Heart left ventricle (tissue), 16 donors: ENCODE measurements at regions of chr4 and their contacts with region 1.

Region 1: GRCh38 chr4:118989098-118990080 is 100.7 kb downstream of the SYNPO2 start:
- DNase-seq: no peak
- ATAC-seq: peak; percentile 35 to 68 (median 52)
- H3K4me3 ChIP-seq: no peak overlapping the region
- H3K27ac ChIP-seq: peak overlapping the region in 11 of 12 donors; percentile 6 to 87 (median 69)
- H3K4me1 ChIP-seq: peaks cover 0 to 79% (median 40%) of the 10 kb centered on the region in 12 donors
- H3K27me3 ChIP-seq: no peaks in the 10 kb centered on the region
- CTCF ChIP-seq: no peak
- POLR2A ChIP-seq: no peak

Region 2: DNA sequence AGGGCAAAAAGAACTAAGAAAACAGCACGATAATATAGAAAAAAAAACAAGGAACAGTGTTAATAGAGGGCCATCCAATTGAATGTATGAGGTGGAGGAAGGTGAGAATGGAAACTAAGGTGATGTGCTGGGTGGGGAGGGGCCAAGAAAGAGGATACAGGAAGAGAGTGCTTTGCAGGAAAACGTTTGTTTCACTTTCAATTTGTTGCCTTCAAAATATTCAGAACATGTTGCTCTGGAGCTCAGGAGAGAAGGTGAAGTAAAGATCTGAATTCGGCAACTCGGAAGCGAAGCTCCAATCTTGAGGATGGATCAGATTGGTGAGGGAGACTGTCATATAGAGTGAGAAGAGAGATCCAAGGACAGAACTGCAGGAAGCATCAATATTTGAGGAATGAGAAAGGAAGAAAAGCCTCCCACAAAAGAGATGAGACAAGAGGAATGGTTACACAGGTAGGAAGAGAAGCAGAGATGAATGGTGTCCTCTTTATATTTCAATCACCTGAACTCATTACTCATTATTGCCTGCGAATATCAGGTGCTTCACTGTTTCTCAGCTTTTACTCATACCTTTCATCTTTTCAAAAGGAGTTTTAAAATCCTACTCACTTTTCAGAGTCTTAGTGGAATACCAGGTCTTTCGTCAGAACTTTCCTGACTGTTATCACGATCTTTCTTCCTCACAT is 138.8 kb before region 1 on chr4:
- intact Hi-C with region 1: no loop called
- DNase-seq: no peak
- ATAC-seq: peak in 3 of 4 donors; percentile 39 to 63 (median 42)
- H3K4me3 ChIP-seq: peak overlapping the region in 11 of 12 donors; percentile 5 to 61 (median 47)
- H3K27ac ChIP-seq: peak overlapping the region in 5 of 12 donors; percentile 1 to 51 (median 50)
- H3K4me1 ChIP-seq: peaks cover 0 to 13% (median 4%) of the 10 kb centered on the region in 12 donors
- H3K27me3 ChIP-seq: no peaks in the 10 kb centered on the region
- CTCF ChIP-seq: no peak
- POLR2A ChIP-seq: no peak

Region 3: DNA sequence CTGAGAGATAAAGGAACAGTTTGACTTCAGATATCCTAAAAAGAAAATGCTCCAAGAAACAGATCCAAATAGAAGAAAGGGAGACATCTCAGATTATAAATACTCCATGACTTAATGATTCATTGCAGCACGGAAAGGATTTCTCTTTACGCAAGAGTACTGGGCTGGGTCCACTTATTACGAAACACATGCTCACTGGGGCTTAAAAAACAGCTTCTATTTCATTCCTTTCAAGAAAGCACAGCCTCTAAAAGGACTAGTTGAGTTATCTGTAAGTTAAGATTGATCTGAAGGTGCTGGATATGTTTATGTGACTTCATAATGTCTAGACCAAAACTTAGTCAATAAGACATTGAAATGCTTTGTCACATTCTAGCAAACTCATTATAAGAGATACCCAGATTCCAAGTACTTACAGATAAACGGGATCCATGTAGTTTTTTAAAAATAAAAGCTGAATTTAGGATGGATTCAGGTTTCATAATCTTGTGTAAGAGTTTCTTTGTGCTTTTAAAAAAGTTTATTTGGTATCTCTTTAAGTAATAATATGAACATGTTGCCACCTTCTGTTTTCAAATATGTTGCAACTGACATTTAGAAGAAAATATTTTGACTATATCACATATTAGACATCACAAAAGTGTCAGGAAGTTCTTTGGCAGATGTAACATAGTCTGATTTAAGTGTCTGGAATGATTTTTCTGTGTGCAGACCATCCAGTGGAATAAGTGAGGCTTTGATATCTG is 36.7 kb after region 1 on chr4:
- intact Hi-C with region 1: loop called in 6 of 10 experiments (anchors 5 kb)
- DNase-seq: peak in 2 of 5 donors; percentile 39 to 52
- ATAC-seq: peak; percentile 72 to 87 (median 80)
- H3K4me3 ChIP-seq: peak overlapping the region in 5 of 12 donors; percentile 4 to 43 (median 13)
- H3K27ac ChIP-seq: peak overlapping the region; percentile 19 to 94 (median 87)
- H3K4me1 ChIP-seq: peaks cover 0 to 59% (median 36%) of the 10 kb centered on the region in 12 donors
- H3K27me3 ChIP-seq: no peaks in the 10 kb centered on the region
- CTCF ChIP-seq: no peak
- POLR2A ChIP-seq: no peak

Region 4: DNA sequence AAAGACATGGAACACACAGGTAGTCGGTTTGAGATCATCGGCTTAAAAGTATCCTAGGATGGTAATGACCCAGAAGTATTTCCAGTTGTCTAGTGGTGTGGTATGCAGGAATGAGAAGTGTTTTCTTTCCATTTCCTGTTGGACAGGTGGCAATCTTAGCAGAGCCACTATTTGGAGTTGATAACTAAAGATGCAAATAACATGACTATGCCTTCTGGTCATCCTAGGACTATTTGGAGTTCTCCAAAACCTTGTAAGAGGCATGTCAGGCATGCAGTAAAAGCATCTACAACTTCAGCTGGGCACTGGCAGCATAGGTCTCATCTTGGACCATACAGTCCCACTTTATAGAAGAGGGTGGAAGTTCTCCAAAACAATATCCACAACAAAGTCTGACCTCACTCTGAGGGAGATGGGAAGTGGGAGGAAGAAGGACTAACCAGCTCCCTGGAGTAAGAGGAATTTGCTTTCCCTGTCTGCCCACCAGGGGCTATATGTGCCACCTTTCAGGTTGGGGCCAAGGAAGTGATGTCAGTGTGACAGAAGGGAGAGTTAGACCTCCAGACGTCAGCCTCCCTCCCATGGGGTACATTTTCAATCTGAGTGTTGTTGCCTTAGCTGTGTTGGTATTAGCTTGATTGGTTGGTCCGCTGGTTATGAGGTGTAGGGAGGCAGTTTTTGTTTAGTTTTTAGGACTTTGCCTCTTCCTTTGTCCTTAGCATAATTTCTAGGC is 45.1 kb after region 1 on chr4:
- intact Hi-C with region 1: loop called in 8 of 10 experiments (anchors 5 kb)
- DNase-seq: no peak
- ATAC-seq: peak in 1 of 4 donors; percentile 9
- H3K4me3 ChIP-seq: no peak overlapping the region
- H3K27ac ChIP-seq: peak overlapping the region in 9 of 12 donors; percentile 16 to 91 (median 50)
- H3K4me1 ChIP-seq: peaks cover 0 to 59% (median 34%) of the 10 kb centered on the region in 12 donors
- H3K27me3 ChIP-seq: no peaks in the 10 kb centered on the region
- CTCF ChIP-seq: no peak
- POLR2A ChIP-seq: no peak

Region 5: GRCh38 chr4:119550857-119551532 is 561.6 kb after region 1 on chr4:
- intact Hi-C with region 1: no loop called
- DNase-seq: no peak
- ATAC-seq: peak; percentile 55 to 77 (median 66)
- H3K4me3 ChIP-seq: no peak overlapping the region
- H3K27ac ChIP-seq: peak overlapping the region in 2 of 12 donors; percentile 9 to 32
- H3K4me1 ChIP-seq: peaks cover 0 to 16% (median 3%) of the 10 kb centered on the region in 12 donors
- H3K27me3 ChIP-seq: no peaks in the 10 kb centered on the region
- CTCF ChIP-seq: no peak
- POLR2A ChIP-seq: no peak